Right cardiac atrium (tissue), 5 donors: ENCODE measurements at regions of chr17 and their contacts with region 1.

Region 1: GRCh38 chr17:75740631-75741077 is 19.4 kb downstream of the ITGB4 start:
- DNase-seq: peak in 1 of 3 donors; percentile 29
- ATAC-seq: no peak
- H3K4me3 ChIP-seq: no peak overlapping the region
- H3K27ac ChIP-seq: no peak overlapping the region
- H3K4me1 ChIP-seq: no peaks in the 10 kb centered on the region
- H3K27me3 ChIP-seq: no peaks in the 10 kb centered on the region

Region 2: DNA sequence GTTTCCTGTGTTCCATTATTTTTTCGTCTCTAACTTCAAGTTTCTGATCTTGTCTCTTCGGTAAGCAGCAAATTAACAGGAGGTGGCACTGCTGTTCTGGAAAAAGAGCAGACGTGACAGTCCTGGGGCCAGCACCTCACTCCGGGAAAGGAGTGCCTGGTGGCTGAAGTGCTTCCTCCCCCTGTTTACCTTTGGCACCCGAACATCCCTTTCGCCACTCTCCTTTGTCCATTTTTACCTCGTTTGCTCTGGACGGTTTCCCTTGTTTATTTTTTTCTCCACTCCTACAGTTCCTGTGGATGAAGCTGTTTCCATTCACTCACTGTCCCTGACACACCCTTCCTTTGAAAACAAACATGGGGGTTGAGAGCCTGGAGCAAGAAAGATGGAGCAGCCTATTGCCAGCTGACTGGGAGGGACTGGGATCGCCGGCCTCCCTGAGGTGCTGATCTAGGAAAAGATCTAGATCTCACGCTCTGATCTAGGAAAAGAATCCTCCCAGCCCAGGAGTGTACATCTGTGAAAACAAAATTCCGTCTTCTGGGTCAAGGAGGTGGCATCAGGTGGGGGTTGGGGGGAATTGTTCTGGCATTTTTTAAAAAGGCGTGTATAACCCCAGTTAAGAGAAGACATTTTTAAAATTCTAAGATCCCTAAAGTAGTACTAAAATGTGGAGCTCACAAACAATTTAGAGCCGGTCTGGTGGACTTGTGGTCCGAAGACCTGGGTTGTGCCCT is 60.8 kb before region 1 on chr17:
- intact Hi-C with region 1: loop called in 1 of 4 experiments (anchors 5 kb)
- DNase-seq: peak; percentile 66 to 75 (median 67)
- ATAC-seq: peak; percentile 84 to 94
- H3K4me3 ChIP-seq: no peak overlapping the region
- H3K27ac ChIP-seq: peak overlapping the region; percentile 56
- H3K4me1 ChIP-seq: peaks cover 7% of the 10 kb centered on the region
- H3K27me3 ChIP-seq: no peaks in the 10 kb centered on the region

Region 3: DNA sequence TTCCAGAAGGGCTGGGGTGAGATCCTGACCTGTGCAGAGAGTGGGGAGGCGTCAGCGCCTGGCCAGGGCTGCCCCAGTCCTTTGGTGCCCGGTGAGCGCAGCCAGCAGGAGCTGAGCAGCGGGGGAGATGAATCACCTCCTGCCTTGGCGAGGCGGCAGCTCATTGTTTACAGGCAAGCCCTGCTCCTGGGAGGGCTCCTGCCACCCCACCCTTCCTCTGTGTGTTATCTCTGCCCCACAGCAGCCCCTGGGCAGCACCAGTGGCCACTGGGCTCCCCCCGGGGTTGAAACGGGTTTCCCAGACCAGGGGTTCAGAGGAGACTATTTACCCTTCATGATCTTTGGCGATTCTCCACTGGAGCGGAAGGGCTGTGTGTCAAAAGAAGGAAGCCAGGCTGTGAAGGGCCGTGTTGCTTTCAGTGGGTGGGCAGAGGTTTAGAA is 33.5 kb before region 1 on chr17:
- intact Hi-C with region 1: loop called in 1 of 4 experiments (anchors 5 kb)
- DNase-seq: peak; percentile 79 to 84 (median 83)
- ATAC-seq: peak; percentile 75 to 94
- H3K4me3 ChIP-seq: no peak overlapping the region
- H3K27ac ChIP-seq: peak overlapping the region; percentile 56
- H3K4me1 ChIP-seq: peaks cover 6% of the 10 kb centered on the region
- H3K27me3 ChIP-seq: no peaks in the 10 kb centered on the region